MCF 10A (cell line): ENCODE measurements at regions of chr1 and their contacts with region 1.

Region 1: GRCh38 chr1:168082008-168082876 is 54.5 kb downstream of the GPR161 start:
- DNase-seq: peak; percentile 88
- H3K4me3 Mint-ChIP-seq: no peak overlapping the region
- H3K27ac Mint-ChIP-seq: peak overlapping the region; percentile 82
- H3K4me1 Mint-ChIP-seq: peaks cover 28% of the 10 kb centered on the region
- H3K27me3 Mint-ChIP-seq: no peaks in the 10 kb centered on the region
- CTCF ChIP-seq: peak; percentile 95

Region 2: DNA sequence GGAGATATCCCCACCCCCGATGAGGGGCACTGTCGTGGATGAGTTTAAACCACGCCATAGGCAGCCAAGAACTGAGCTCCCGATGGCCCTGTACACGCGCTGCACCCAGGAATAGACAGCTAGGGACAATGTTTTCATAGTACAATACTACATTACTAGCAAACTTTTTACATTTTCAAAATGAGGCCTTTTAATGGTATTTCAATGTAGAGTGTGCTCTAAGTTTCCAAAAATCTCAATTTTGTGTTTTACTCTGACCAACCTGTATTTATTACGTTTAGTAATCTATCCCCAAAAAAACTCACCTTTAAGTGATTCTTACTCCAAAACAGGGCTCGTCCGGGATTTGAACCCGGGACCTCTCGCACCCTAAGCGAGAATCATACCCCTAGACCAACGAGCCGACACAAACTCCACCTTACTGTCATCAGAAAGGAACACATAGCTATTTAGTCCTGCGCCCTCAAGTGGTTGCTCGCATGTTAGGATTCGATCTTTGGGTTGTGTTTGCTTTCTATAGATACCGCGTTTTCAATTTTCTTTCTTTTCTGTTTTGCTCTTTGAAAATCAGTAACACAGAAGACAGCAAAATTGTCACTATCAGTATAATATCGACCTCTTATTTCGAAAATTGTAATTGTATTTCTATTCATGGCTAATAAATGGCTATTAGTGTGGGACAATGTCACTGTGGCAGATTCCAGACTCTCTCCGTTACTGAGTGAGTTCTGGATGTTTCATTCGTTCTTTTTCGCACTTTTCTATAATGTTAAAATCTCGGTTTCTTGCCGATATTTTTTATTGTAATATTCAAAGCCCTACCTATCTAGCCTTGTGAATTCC is 366.9 kb before region 1 on chr1:
- CTCF ChIA-PET with region 1: interaction called, 18 read pairs
- POLR2A ChIA-PET with region 1: no interaction called
- intact Hi-C with region 1: no loop called
- DNase-seq: peak; percentile 97
- H3K4me3 Mint-ChIP-seq: peak overlapping the region; percentile 88
- H3K27ac Mint-ChIP-seq: peak overlapping the region; percentile 91
- H3K4me1 Mint-ChIP-seq: peaks cover 16% of the 10 kb centered on the region
- H3K27me3 Mint-ChIP-seq: no peaks in the 10 kb centered on the region
- CTCF ChIP-seq: peak; percentile 98

Region 3: GRCh38 chr1:168019407-168019806 is 62.8 kb before region 1 on chr1:
- CTCF ChIA-PET with region 1: interaction called, 11 read pairs
- POLR2A ChIA-PET with region 1: no interaction called
- intact Hi-C with region 1: no loop called
- DNase-seq: no peak
- H3K4me3 Mint-ChIP-seq: no peak overlapping the region
- H3K27ac Mint-ChIP-seq: no peak overlapping the region
- H3K4me1 Mint-ChIP-seq: no peaks in the 10 kb centered on the region
- H3K27me3 Mint-ChIP-seq: no peaks in the 10 kb centered on the region
- CTCF ChIP-seq: no peak

Region 4: GRCh38 chr1:168092566-168093355 is 10.5 kb after region 1 on chr1:
- CTCF ChIA-PET with region 1: interaction called, 116 read pairs
- POLR2A ChIA-PET with region 1: interaction called, 8 read pairs
- intact Hi-C with region 1: no loop called
- DNase-seq: peak; percentile 57
- H3K4me3 Mint-ChIP-seq: no peak overlapping the region
- H3K27ac Mint-ChIP-seq: no peak overlapping the region
- H3K4me1 Mint-ChIP-seq: peaks cover 4% of the 10 kb centered on the region
- H3K27me3 Mint-ChIP-seq: no peaks in the 10 kb centered on the region
- CTCF ChIP-seq: peak; percentile 61

Region 5: DNA sequence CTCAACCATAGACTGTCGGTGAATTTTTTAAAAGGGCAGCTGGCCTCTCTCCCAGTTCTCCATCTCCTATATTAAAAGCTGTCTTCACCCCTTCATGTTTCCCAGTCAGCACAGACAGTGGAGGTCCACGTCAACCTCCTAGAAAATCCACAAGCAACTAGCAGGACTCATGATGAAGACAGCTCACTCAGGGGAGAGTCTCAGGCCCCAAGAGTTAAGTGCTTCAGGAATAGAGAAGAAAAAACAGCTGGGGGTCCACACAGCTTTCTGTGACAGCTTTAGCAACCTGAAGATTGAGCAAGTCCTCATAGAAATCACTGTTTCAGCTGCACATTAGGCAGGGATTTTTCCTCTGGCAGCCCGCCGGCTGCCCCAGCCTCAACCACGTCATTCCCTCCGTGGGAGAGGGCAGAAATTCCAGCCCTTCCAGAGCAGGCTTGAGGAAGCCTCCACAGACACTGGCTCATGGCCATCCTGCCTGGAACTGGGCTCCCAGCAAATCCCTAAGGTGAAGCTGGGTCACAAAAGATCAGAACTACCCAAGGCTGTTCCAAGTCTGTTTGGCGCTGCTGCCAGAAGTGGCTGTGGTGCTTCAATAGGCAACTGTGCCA is 39.3 kb after region 1 on chr1:
- CTCF ChIA-PET with region 1: interaction called, 18 read pairs
- POLR2A ChIA-PET with region 1: no interaction called
- intact Hi-C with region 1: no loop called
- DNase-seq: peak; percentile 92
- H3K4me3 Mint-ChIP-seq: no peak overlapping the region
- H3K27ac Mint-ChIP-seq: no peak overlapping the region
- H3K4me1 Mint-ChIP-seq: peaks cover 39% of the 10 kb centered on the region
- H3K27me3 Mint-ChIP-seq: no peaks in the 10 kb centered on the region
- CTCF ChIP-seq: no peak

Region 6: DNA sequence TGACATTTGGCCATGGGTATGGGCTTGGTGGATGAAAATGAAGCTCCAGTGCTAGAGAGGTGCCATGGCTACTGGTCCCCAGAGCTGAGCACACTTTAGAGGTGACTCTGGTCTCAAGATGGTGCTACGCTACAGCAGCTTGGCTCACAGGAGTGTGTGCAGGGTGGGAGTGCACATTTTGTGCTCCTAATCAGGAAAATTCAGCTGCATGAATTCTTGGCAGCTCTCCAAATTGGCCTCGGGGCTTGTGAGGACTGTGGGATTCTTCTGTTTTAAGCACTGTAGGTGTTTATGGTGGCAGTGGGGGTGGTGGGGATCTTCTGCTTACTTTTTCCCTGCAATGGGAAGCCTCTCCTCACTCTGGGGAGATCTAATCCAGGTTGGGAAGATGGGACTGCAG is 79.2 kb after region 1 on chr1:
- CTCF ChIA-PET with region 1: interaction called, 11 read pairs
- POLR2A ChIA-PET with region 1: interaction called, 3 read pairs
- intact Hi-C with region 1: no loop called
- DNase-seq: no peak
- H3K4me3 Mint-ChIP-seq: no peak overlapping the region
- H3K27ac Mint-ChIP-seq: no peak overlapping the region
- H3K4me1 Mint-ChIP-seq: no peaks in the 10 kb centered on the region
- H3K27me3 Mint-ChIP-seq: no peaks in the 10 kb centered on the region
- CTCF ChIP-seq: no peak

Region 7: DNA sequence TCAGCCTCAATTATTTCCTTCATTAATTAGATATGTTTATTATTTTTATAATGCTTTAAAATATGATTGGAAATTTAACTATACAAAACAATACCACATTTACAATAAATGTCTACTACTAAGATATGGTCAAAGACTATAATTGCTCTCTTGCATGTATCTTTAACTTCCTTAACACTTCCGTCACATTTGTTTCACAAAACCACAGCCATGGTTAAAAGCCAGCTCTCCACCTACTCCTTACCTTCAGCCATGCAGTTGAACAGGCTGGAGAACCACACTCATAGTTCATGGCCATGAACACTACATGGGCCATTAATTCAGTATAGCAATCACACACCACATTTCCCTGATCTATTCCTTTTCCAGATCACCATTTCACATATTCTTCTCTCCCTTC is 1213.2 kb after region 1 on chr1:
- CTCF ChIA-PET with region 1: no interaction called
- POLR2A ChIA-PET with region 1: no interaction called
- intact Hi-C with region 1: no loop called
- DNase-seq: no peak
- H3K4me3 Mint-ChIP-seq: no peak overlapping the region
- H3K27ac Mint-ChIP-seq: no peak overlapping the region
- H3K4me1 Mint-ChIP-seq: no peaks in the 10 kb centered on the region
- H3K27me3 Mint-ChIP-seq: no peaks in the 10 kb centered on the region
- CTCF ChIP-seq: no peak